CD8-positive, alpha-beta T cell (primary cell): ENCODE measurements at regions of chr21 and their contacts with region 1.

Region 1: GRCh38 chr21:14737922-14738321 is 191.8 kb upstream of the SAMSN1 start:
- DNase-seq: peak in 8 of 9 experiments; percentile 11 to 84 (median 47)
- ATAC-seq: peak; percentile 96
- H3K4me3 ChIP-seq: no peak overlapping the region
- H3K4me3 Mint-ChIP-seq: no peak overlapping the region
- H3K27ac ChIP-seq: no peak overlapping the region
- H3K27ac Mint-ChIP-seq: no peak overlapping the region
- H3K4me1 ChIP-seq: no peaks in the 10 kb centered on the region
- H3K4me1 Mint-ChIP-seq: peaks cover 5% of the 10 kb centered on the region
- H3K27me3 ChIP-seq: no peaks in the 10 kb centered on the region
- H3K27me3 Mint-ChIP-seq: no peaks in the 10 kb centered on the region
- CTCF ChIP-seq: peak; percentile 85

Region 2: DNA sequence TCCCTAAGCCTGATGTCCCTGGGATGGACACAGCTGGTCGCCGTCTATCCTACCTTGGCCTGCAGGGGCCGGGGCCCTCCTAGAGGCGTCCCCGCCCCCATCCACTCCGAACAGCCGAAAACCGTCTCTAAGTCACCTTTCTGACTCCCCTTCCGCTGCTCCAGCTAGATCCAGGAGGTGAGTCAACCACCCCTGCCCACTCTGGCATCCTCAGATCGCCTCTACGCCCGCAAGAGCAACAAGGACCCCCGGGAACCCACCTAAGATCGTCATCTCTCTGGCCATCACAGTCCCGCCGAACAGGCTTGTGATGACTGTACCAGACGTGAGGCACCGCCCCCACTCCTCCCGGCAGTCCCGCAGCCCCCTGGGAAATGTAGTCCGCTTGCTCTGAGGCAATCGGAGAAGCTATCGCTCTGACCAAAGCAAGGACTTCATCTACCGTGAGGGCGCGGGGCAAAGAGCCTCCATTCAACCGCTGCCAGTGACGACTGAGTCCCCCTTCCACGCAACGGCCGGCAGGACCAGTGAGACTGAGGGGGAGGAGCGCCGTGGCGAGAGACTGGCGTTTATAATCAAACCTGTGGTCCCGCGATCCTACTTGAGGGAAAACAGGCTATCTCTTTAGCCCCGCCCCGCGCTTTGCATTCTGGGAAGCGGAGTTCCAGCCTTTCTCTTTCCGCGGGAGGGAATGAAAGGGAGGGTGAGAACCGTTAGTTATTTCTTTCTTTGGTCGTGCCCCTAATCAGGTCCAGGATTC is 354.9 kb before region 1 on chr21 and contains the start of gene HSPA13:
- CTCF ChIA-PET with region 1: no interaction called
- POLR2A ChIA-PET with region 1: no interaction called
- intact Hi-C with region 1: loop called in 1 of 2 experiments (anchors 5 kb)
- DNase-seq: peak; percentile 97 to 100 (median 99)
- ATAC-seq: peak; percentile 91
- H3K4me3 ChIP-seq: peak within 1 kb of the TSS; percentile 65 to 92
- H3K4me3 Mint-ChIP-seq: peak within 1 kb of the TSS; percentile 100
- H3K27ac ChIP-seq: peak within 1 kb of the TSS; percentile 94 to 96
- H3K27ac Mint-ChIP-seq: peak within 1 kb of the TSS; percentile 100
- H3K4me1 ChIP-seq: peaks cover 24% of the 10 kb centered on the region
- H3K4me1 Mint-ChIP-seq: peaks cover 40% of the 10 kb centered on the region
- H3K27me3 ChIP-seq: no peaks in the 10 kb centered on the region
- H3K27me3 Mint-ChIP-seq: no peaks in the 10 kb centered on the region
- CTCF ChIP-seq: no peak
- total RNA-seq, gene HSPA13: 54.3 to 58.1 TPM

Region 3: DNA sequence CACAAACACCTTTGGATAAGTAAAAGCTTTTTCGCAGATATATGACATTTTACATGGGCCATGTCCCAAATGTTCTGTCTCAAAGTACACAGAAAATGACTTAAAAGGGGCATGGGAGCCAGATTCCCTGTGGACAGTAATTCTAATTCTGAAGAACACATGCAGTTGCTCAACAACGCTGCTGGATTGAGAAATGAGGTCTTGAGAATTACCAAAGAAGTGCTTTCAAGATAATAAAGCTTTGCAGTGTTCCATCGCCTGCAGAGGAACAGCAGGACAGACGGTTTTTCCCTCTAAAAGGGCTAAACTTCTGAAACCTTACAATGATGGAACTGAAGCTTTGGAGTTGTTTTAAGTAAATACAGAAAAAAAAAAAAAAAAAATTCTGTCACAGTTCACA is 299.7 kb before region 1 on chr21:
- CTCF ChIA-PET with region 1: interaction called, 12 read pairs
- POLR2A ChIA-PET with region 1: no interaction called
- intact Hi-C with region 1: no loop called
- DNase-seq: no peak
- ATAC-seq: no peak
- H3K4me3 ChIP-seq: no peak overlapping the region
- H3K4me3 Mint-ChIP-seq: no peak overlapping the region
- H3K27ac ChIP-seq: no peak overlapping the region
- H3K27ac Mint-ChIP-seq: no peak overlapping the region
- H3K4me1 ChIP-seq: no peaks in the 10 kb centered on the region
- H3K4me1 Mint-ChIP-seq: no peaks in the 10 kb centered on the region
- H3K27me3 ChIP-seq: no peaks in the 10 kb centered on the region
- H3K27me3 Mint-ChIP-seq: no peaks in the 10 kb centered on the region
- CTCF ChIP-seq: no peak

Region 4: GRCh38 chr21:14523234-14523633 is 214.7 kb before region 1 on chr21:
- CTCF ChIA-PET with region 1: interaction called, 3 read pairs
- POLR2A ChIA-PET with region 1: no interaction called
- intact Hi-C with region 1: loop called (anchors 5 to 10 kb)
- DNase-seq: peak in 3 of 9 experiments; percentile 12 to 63 (median 56)
- ATAC-seq: peak; percentile 49
- H3K4me3 ChIP-seq: peak overlapping the region in 1 of 2 experiments; percentile 18
- H3K4me3 Mint-ChIP-seq: peak overlapping the region; percentile 67
- H3K27ac ChIP-seq: peak overlapping the region in 1 of 2 experiments; percentile 21
- H3K27ac Mint-ChIP-seq: peak overlapping the region; percentile 4
- H3K4me1 ChIP-seq: peaks cover 10% of the 10 kb centered on the region
- H3K4me1 Mint-ChIP-seq: peaks cover 58% of the 10 kb centered on the region
- H3K27me3 ChIP-seq: no peaks in the 10 kb centered on the region
- H3K27me3 Mint-ChIP-seq: no peaks in the 10 kb centered on the region
- CTCF ChIP-seq: no peak

Region 5: DNA sequence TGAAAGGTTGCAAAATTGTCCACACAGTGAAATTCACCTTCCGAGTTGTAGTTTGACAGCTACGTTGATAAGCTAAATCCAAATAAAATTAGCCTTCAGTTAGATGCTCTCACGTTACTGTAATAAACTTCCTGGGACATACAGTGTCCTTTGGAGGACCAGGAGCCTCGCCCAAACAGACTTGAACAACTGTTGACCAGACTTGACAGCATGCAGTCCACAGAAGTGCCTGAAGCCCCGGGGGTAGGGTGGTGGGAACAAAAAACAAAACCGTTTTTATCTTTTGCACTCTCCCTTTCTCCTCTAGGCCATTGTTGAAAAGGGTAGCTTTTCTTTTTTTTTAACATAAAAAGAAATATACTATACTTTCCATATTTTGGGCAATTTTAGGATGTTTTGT is 19.0 kb before region 1 on chr21:
- CTCF ChIA-PET with region 1: interaction called, 12 read pairs
- POLR2A ChIA-PET with region 1: no interaction called
- intact Hi-C with region 1: no loop called
- DNase-seq: no peak
- ATAC-seq: no peak
- H3K4me3 ChIP-seq: no peak overlapping the region
- H3K4me3 Mint-ChIP-seq: no peak overlapping the region
- H3K27ac ChIP-seq: no peak overlapping the region
- H3K27ac Mint-ChIP-seq: no peak overlapping the region
- H3K4me1 ChIP-seq: no peaks in the 10 kb centered on the region
- H3K4me1 Mint-ChIP-seq: no peaks in the 10 kb centered on the region
- H3K27me3 ChIP-seq: no peaks in the 10 kb centered on the region
- H3K27me3 Mint-ChIP-seq: no peaks in the 10 kb centered on the region
- CTCF ChIP-seq: no peak

Region 6: DNA sequence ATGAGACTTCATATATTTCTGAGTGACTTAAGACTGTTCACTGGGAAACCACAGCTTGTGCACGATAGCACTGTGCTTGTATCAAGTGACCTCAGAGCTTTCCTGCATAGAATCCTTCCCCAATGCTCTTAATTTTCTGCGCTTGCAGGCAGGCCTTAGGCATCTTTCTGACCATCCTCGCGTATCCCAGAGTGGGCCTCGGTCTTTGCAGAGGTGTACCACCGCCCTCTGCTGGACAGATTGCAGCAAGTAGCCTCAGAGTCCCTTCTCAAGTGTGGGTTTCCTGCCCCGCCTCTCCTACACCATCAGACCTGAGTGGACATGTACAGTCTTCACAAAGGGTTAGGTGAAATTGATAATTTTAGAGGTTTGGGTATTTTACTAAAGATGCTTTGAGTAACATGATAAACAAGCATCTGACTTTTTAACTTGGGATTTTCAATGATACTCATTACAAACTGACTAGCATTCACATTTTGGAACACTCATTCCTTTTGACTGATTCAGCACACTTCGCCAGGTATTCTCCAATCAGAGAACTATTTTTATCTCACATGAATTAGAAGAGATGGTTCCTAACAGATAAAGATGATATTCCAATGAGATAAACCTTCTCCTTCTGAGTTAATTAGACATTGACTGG is 745.3 kb after region 1 on chr21:
- CTCF ChIA-PET with region 1: interaction called, 4 read pairs
- POLR2A ChIA-PET with region 1: no interaction called
- intact Hi-C with region 1: loop called in 1 of 2 experiments (anchors 5 kb)
- DNase-seq: peak; percentile 46 to 87 (median 79)
- ATAC-seq: peak; percentile 99
- H3K4me3 ChIP-seq: no peak overlapping the region
- H3K4me3 Mint-ChIP-seq: no peak overlapping the region
- H3K27ac ChIP-seq: no peak overlapping the region
- H3K27ac Mint-ChIP-seq: no peak overlapping the region
- H3K4me1 ChIP-seq: no peaks in the 10 kb centered on the region
- H3K4me1 Mint-ChIP-seq: peaks cover 15% of the 10 kb centered on the region
- H3K27me3 ChIP-seq: no peaks in the 10 kb centered on the region
- H3K27me3 Mint-ChIP-seq: no peaks in the 10 kb centered on the region
- CTCF ChIP-seq: peak; percentile 89